ENCODE measurements at regions of chr11 and their contacts with region 1.

Region 1: DNA sequence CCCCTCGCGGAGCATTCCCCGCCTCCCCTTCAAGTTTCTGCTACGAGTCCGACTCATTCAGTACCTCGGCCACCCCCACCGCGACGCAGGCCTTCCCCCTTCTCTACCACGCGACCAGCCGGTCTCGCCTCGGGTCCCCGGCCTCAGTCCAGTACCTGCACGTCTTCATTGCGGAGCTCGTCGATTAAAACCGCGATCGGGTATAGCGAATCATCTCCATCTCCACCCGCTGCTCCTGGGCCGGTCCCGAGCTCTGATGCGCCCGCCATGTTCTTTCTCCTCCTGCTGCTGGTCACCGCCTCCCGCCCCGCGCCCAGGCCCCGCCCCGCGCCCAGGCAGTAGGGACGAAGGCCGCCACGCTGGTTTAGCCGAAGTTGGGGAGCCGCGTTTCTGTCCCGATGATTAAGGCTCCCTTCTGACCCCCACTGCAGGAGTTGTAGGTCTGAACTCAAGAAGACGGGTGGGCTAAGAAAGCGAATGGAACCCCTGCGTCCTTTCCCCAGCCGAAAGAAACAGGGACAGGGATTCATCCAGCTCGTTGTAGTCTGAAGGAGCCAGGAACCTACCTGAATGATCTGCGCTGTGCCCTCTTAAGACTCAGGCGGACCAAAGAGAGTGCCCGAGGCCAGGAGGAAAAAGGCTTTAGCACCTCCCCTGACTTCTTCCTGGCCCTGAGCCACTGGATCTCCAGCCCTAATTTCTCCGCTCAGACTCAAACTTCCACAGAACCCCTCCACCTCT is at the start of gene PPP2R1B:
- DNase-seq: peak; percentile 78
- H3K4me3 Mint-ChIP-seq: peak within 1 kb of the TSS; percentile 100
- H3K27ac Mint-ChIP-seq: peak within 1 kb of the TSS; percentile 96
- H3K4me1 Mint-ChIP-seq: peaks cover 33% of the 10 kb centered on the region
- H3K27me3 Mint-ChIP-seq: no peaks in the 10 kb centered on the region
- total RNA-seq, gene PPP2R1B: 36.7 to 43.8 TPM

Region 2: GRCh38 chr11:111378861-111379601 is 387.2 kb before region 1 on chr11 and contains the start of gene POU2AF1:
- CTCF ChIA-PET with region 1: no interaction called
- intact Hi-C with region 1: loop called (anchors 5 kb)
- DNase-seq: peak; percentile 81
- H3K4me3 Mint-ChIP-seq: peak within 1 kb of the TSS; percentile 71
- H3K27ac Mint-ChIP-seq: peak within 1 kb of the TSS; percentile 86
- H3K4me1 Mint-ChIP-seq: peaks cover 58% of the 10 kb centered on the region
- H3K27me3 Mint-ChIP-seq: no peaks in the 10 kb centered on the region
- total RNA-seq, gene POU2AF1: 0.48 to 0.62 TPM

Region 3: GRCh38 chr11:111777094-111778046 is 11.1 kb after region 1 on chr11:
- CTCF ChIA-PET with region 1: interaction called, 30 read pairs
- intact Hi-C with region 1: no loop called
- DNase-seq: peak; percentile 35
- H3K4me3 Mint-ChIP-seq: no peak overlapping the region
- H3K27ac Mint-ChIP-seq: no peak overlapping the region
- H3K4me1 Mint-ChIP-seq: no peaks in the 10 kb centered on the region
- H3K27me3 Mint-ChIP-seq: no peaks in the 10 kb centered on the region

Region 4: GRCh38 chr11:111870886-111871692 is 104.8 kb after region 1 on chr11 and contains the start of gene ALG9:
- CTCF ChIA-PET with region 1: no interaction called
- intact Hi-C with region 1: loop called (anchors 1 kb)
- DNase-seq: peak; percentile 93
- H3K4me3 Mint-ChIP-seq: peak within 1 kb of the TSS; percentile 89
- H3K27ac Mint-ChIP-seq: peak within 1 kb of the TSS; percentile 83
- H3K4me1 Mint-ChIP-seq: peaks cover 25% of the 10 kb centered on the region
- H3K27me3 Mint-ChIP-seq: no peaks in the 10 kb centered on the region
- total RNA-seq, gene ALG9: 21.3 to 21.9 TPM

Region 5: GRCh38 chr11:111982019-111982464 is 215.8 kb after region 1 on chr11:
- CTCF ChIA-PET with region 1: no interaction called
- intact Hi-C with region 1: no loop called
- DNase-seq: peak; percentile 85
- H3K4me3 Mint-ChIP-seq: no peak overlapping the region
- H3K27ac Mint-ChIP-seq: no peak overlapping the region
- H3K4me1 Mint-ChIP-seq: peaks cover 12% of the 10 kb centered on the region
- H3K27me3 Mint-ChIP-seq: peaks cover 26% of the 10 kb centered on the region

Region 6: GRCh38 chr11:112226062-112226830 is 460.0 kb after region 1 on chr11 and contains the start of gene PTS:
- CTCF ChIA-PET with region 1: no interaction called
- intact Hi-C with region 1: loop called (anchors 5 kb)
- DNase-seq: peak; percentile 86
- H3K4me3 Mint-ChIP-seq: peak within 1 kb of the TSS; percentile 88
- H3K27ac Mint-ChIP-seq: peak within 1 kb of the TSS; percentile 91
- H3K4me1 Mint-ChIP-seq: peaks cover 17% of the 10 kb centered on the region
- H3K27me3 Mint-ChIP-seq: no peaks in the 10 kb centered on the region
- total RNA-seq, gene PTS: 34.6 to 39.0 TPM